ENCODE measurements at regions of chr11 and their contacts with region 1.

Region 1: GRCh38 chr11:13343931-13344717 is 66.5 kb downstream of the BMAL1 start:
- DNase-seq: peak; percentile 54 to 84 (median 68)
- ATAC-seq: peak; percentile 72
- H3K4me3 ChIP-seq: no peak overlapping the region
- H3K4me3 Mint-ChIP-seq: no peak overlapping the region
- H3K27ac ChIP-seq: no peak overlapping the region
- H3K27ac Mint-ChIP-seq: peak overlapping the region; percentile 0
- H3K4me1 ChIP-seq: peaks cover 42% of the 10 kb centered on the region
- H3K4me1 Mint-ChIP-seq: peaks cover 63% of the 10 kb centered on the region
- H3K27me3 ChIP-seq: no peaks in the 10 kb centered on the region
- H3K27me3 Mint-ChIP-seq: no peaks in the 10 kb centered on the region
- CTCF ChIP-seq: peak; percentile 85

Region 2: DNA sequence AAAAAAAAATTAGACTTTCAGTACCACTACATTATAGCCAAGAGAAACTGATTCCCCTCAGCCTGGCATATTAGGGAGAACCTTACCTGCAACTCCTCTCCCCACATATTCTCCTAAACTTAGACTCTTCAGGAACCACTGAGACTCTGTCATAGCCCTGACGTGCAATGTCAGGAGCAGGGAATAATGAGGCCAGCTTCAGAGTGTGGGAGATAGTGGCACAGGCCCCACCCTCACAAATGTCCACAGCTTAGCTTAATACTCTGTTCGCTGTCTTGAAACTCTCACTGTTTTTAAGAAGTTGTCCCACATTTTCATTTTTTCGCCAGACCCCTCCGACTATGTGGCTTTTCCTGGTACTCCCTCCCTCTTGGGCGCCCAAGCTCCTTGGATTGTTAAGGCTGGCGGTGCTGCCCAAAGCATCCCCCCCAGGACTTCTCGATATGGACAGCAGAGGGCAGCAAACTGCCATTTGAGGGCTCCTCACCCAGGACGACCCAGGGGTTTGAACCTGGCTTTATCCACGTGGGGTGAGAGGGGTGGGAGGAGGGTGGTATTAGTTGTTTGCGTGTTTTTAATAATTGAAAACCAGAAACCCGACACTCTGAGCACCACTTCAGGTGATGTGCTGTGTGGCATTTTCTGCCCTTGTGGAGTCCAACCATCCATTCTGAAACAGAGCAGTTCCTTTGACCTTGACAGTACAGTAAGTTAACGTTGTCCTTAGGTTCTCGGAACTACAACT is 380.2 kb before region 1 on chr11:
- CTCF ChIA-PET with region 1: no interaction called
- POLR2A ChIA-PET with region 1: no interaction called
- intact Hi-C with region 1: loop called (anchors 1 kb)
- DNase-seq: peak; percentile 20 to 70 (median 46)
- ATAC-seq: peak; percentile 65
- H3K4me3 ChIP-seq: no peak overlapping the region
- H3K4me3 Mint-ChIP-seq: no peak overlapping the region
- H3K27ac ChIP-seq: no peak overlapping the region
- H3K27ac Mint-ChIP-seq: no peak overlapping the region
- H3K4me1 ChIP-seq: no peaks in the 10 kb centered on the region
- H3K4me1 Mint-ChIP-seq: no peaks in the 10 kb centered on the region
- H3K27me3 ChIP-seq: peaks cover 5 to 11% of the 10 kb centered on the region in 2 experiments
- H3K27me3 Mint-ChIP-seq: peaks cover 47% of the 10 kb centered on the region
- CTCF ChIP-seq: peak; percentile 67

Region 3: DNA sequence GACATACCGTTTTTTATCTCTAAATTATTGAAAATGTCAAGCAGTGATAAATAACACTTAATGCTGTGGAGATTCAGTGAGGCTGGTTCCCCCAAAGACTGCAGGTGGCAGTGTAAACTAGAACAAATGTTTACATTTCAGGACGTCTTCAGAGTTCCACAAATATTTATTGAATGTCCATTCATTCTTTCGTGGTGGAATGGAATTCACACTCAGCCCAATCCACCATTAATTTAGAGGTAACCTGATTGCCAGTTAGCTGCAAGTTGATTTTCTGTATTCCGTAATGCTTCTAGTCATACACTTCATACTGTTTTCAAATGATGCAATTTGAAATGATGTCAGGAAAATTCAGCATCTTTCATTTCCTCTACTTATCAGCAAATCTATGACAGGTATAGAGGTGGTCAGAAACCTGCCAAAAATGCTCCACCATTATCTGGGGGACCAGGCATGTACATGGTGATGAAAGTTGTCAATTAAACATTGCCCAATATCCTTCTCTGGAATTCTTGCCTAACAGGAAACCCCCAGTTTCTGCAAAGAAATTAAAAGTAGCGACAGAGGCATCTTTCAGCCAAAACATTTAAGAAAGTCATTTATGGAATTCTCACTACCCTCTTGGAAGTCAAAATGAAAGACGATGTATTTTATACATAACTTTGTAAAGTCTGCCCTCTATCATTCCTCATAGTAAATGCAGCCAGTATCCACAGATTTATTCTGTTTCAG is 160.9 kb before region 1 on chr11:
- CTCF ChIA-PET with region 1: no interaction called
- POLR2A ChIA-PET with region 1: no interaction called
- intact Hi-C with region 1: loop called (anchors 1 to 2 kb)
- DNase-seq: peak in 4 of 14 experiments; percentile 18 to 47 (median 42)
- ATAC-seq: no peak
- H3K4me3 ChIP-seq: no peak overlapping the region
- H3K4me3 Mint-ChIP-seq: peak overlapping the region; percentile 14
- H3K27ac ChIP-seq: no peak overlapping the region
- H3K27ac Mint-ChIP-seq: no peak overlapping the region
- H3K4me1 ChIP-seq: no peaks in the 10 kb centered on the region
- H3K4me1 Mint-ChIP-seq: peaks cover 8% of the 10 kb centered on the region
- H3K27me3 ChIP-seq: peaks cover 0 to 6% of the 10 kb centered on the region in 2 experiments
- H3K27me3 Mint-ChIP-seq: peaks cover 24% of the 10 kb centered on the region
- CTCF ChIP-seq: peak; percentile 62

Region 4: DNA sequence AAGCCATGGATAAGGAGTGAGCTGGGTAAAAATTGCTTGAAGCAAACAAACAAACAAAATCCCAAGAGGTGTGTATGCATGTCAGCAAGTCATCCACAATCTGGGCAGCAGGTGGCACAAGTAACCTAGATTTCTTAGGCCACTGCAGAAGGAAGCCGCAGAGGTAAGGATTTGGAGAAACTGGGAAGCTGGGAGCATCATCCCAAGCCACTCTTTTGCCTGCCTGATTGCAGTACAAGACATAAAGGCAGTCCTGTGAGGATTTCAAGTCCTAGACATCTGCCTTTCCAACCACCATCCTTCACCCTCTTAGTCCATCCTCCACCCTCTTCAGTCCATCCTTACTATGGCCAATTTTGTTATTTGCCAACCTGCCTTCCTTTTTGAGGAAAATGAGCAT is 133.7 kb before region 1 on chr11:
- CTCF ChIA-PET with region 1: no interaction called
- POLR2A ChIA-PET with region 1: no interaction called
- intact Hi-C with region 1: loop called in 1 of 2 experiments (anchors 2 kb)
- DNase-seq: peak in 6 of 14 experiments; percentile 17 to 59 (median 30)
- ATAC-seq: no peak
- H3K4me3 ChIP-seq: no peak overlapping the region
- H3K4me3 Mint-ChIP-seq: no peak overlapping the region
- H3K27ac ChIP-seq: no peak overlapping the region
- H3K27ac Mint-ChIP-seq: no peak overlapping the region
- H3K4me1 ChIP-seq: peaks cover 14% of the 10 kb centered on the region
- H3K4me1 Mint-ChIP-seq: peaks cover 31% of the 10 kb centered on the region
- H3K27me3 ChIP-seq: no peaks in the 10 kb centered on the region
- H3K27me3 Mint-ChIP-seq: no peaks in the 10 kb centered on the region
- CTCF ChIP-seq: peak; percentile 38

Region 5: GRCh38 chr11:13276832-13277767 is 67.0 kb before region 1 on chr11:
- CTCF ChIA-PET with region 1: no interaction called
- POLR2A ChIA-PET with region 1: interaction called, 3 read pairs
- intact Hi-C with region 1: loop called in 1 of 2 experiments (anchors 5 kb)
- DNase-seq: peak; percentile 95 to 98 (median 97)
- ATAC-seq: peak; percentile 84
- H3K4me3 ChIP-seq: peak overlapping the region; percentile 98
- H3K4me3 Mint-ChIP-seq: peak overlapping the region; percentile 97
- H3K27ac ChIP-seq: peak overlapping the region; percentile 29 to 66
- H3K27ac Mint-ChIP-seq: peak overlapping the region; percentile 85
- H3K4me1 ChIP-seq: peaks cover 34% of the 10 kb centered on the region
- H3K4me1 Mint-ChIP-seq: peaks cover 49% of the 10 kb centered on the region
- H3K27me3 ChIP-seq: no peaks in the 10 kb centered on the region
- H3K27me3 Mint-ChIP-seq: no peaks in the 10 kb centered on the region
- CTCF ChIP-seq: no peak

Region 6: DNA sequence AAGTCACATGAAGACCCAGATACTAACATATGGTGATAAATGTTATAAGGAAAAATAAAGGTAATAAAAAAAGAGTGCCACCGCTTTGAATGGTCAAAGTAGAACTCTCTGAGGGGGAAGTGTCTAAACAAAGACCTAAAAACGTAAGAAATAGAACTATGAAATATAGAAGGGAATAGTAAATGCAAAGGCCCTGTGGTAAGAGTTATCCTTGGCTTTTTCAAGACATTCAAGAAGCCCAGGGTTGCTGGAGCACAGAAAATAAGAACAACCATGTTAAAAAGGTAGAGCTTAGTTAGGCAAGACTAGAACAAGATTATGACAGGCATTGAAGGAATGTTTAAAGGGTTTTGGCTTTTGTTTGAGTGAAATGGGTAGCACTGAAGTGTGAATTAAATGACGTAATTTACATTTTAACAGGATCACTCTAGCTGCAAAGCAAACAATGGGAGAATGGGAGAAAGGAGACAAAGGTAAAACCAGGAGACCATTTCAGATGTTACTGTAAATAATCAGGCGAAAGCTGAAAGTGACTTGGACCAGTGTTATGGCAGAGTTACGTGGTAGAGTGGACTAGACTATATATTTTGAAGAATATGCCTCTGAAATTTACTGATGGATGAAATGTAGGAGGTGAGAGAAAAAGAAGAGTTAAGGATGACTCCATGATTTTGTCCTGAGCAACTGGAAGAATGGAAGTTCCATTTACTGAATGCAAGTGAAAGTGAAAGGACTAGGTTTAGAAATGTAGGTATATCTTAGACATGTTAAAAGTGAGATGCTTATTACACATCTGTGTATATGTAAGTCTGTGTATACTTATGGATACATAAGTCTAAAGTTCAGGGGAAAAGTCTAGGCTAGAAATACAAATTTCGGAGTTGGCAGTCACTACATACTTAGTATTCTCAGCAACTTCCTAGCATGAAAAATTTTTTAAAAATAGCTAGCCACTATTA is 90.4 kb after region 1 on chr11:
- CTCF ChIA-PET with region 1: no interaction called
- POLR2A ChIA-PET with region 1: no interaction called
- intact Hi-C with region 1: no loop called
- DNase-seq: no peak
- ATAC-seq: no peak
- H3K4me3 ChIP-seq: no peak overlapping the region
- H3K4me3 Mint-ChIP-seq: no peak overlapping the region
- H3K27ac ChIP-seq: no peak overlapping the region
- H3K27ac Mint-ChIP-seq: no peak overlapping the region
- H3K4me1 ChIP-seq: no peaks in the 10 kb centered on the region
- H3K4me1 Mint-ChIP-seq: peaks cover 50% of the 10 kb centered on the region
- H3K27me3 ChIP-seq: no peaks in the 10 kb centered on the region
- H3K27me3 Mint-ChIP-seq: no peaks in the 10 kb centered on the region
- CTCF ChIP-seq: no peak

Region 7: DNA sequence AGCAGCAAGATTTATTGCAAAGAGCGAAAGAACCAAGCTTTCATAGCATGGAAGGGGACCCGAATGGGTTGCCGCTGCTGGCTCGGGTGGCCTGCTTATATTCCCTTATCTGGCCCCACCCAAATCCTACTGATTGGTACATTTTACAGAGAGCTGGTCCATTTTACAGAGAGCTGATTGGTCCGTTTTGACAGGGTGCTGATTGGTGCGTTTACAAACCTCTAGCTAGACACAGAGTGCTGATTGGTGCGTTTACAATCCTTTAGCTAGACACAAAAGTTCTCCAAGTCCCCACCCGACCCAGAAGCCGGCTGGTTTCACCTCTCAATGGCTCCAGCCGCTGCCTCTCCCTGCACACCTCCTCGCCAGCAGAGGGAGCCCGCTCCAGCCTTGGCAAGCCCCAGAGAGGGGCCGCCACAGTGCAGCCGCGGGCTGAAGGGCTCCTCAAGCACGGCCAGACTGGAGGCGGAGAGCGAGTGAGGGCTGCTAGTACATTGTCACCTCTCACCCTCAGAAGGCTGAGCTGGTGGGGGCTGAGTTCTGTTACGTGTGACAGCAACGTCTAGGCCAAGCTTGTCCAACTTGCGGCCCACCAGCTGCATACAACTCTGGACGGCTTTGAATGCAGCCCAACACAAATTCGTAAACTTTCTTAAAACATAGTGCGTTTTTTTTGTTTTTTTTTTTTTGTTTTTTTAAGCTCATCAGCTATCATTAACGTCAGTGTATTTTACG is 143.0 kb after region 1 on chr11:
- CTCF ChIA-PET with region 1: no interaction called
- POLR2A ChIA-PET with region 1: no interaction called
- intact Hi-C with region 1: no loop called
- DNase-seq: peak; percentile 34 to 80 (median 60)
- ATAC-seq: peak; percentile 84
- H3K4me3 ChIP-seq: peak overlapping the region; percentile 50
- H3K4me3 Mint-ChIP-seq: peak overlapping the region; percentile 77
- H3K27ac ChIP-seq: no peak overlapping the region
- H3K27ac Mint-ChIP-seq: peak overlapping the region; percentile 18
- H3K4me1 ChIP-seq: peaks cover 4% of the 10 kb centered on the region
- H3K4me1 Mint-ChIP-seq: peaks cover 5% of the 10 kb centered on the region
- H3K27me3 ChIP-seq: no peaks in the 10 kb centered on the region
- H3K27me3 Mint-ChIP-seq: peaks cover 12% of the 10 kb centered on the region
- CTCF ChIP-seq: no peak